ENCODE measurements at regions of chr13 and their contacts with region 1.

Region 1: DNA sequence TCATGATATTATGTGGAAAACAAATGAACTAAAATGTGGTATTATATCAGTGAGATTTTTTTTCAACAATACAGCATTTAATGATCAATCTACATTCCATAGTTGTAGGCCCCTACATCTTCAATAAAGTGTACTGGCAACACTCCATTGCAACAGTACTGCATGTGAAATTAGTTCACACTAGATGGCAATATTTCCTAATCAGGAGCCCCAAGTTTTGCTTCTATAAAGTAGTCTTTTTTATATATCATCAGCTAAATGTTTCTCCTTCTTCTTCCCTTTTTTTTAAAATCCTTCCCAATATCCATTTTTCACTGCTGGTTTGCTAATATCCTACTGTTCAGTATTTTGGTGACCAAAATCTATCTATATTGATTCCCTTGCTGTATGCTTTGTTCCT is 528.3 kb upstream of the ATXN8OS start:
- DNase-seq: no peak
- H3K4me3 Mint-ChIP-seq: no peak overlapping the region
- H3K27ac Mint-ChIP-seq: no peak overlapping the region
- H3K4me1 Mint-ChIP-seq: no peaks in the 10 kb centered on the region
- H3K27me3 Mint-ChIP-seq: no peaks in the 10 kb centered on the region
- CTCF ChIP-seq: no peak

Region 2: DNA sequence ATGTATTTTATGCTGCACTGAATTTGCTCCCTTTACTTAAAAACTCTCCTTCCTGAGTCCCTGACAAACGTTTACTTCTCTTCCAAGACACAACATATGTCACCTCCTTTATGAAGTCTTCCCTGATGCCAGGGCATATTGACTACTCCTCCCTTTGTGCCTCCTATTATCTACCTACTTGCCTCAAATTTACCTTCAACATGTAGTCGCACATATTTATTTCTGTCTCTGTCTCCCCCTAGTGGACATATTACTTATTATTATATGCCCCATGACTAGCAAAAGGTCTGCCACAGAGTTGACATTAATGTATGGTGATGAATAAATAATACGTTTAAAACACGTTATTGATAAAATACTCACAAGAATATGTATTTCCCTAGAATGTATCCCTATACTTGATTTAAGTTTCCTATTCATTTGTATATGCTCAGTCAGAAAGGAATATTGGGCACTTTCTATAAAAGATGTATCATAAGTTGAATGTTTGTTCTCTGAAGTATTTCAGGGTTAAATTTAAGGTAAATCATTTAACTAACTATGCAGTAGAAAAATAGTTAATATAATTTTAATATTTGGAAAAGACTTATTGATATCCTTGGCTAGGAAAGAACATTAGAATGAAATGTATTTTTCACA is 278.0 kb after region 1 on chr13:
- CTCF ChIA-PET with region 1: no interaction called
- intact Hi-C with region 1: loop called (anchors 1 kb)
- DNase-seq: no peak
- H3K4me3 Mint-ChIP-seq: no peak overlapping the region
- H3K27ac Mint-ChIP-seq: peak overlapping the region; percentile 11
- H3K4me1 Mint-ChIP-seq: peaks cover 14% of the 10 kb centered on the region
- H3K27me3 Mint-ChIP-seq: no peaks in the 10 kb centered on the region
- CTCF ChIP-seq: no peak

Region 3: DNA sequence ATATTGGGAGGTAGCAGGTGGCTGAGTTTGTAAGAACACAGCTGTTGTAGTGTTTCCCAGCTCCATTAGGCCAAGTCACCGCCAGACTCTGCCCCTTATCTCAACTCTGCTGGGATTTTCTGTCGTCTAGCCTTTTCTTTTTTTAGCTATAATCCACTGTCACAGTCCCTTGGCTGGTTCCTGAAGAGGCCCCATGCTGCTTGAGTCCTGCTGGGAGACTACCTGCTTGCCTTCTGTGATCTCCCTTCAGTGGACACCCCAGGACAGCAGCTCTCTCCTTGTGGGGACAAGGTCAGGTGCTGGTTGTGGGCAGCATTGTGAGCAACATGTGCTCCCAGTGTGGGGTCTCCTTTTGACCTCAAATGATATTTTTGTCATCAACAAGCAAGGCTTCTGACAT is 333.3 kb after region 1 on chr13:
- CTCF ChIA-PET with region 1: no interaction called
- intact Hi-C with region 1: no loop called
- DNase-seq: no peak
- H3K4me3 Mint-ChIP-seq: no peak overlapping the region
- H3K27ac Mint-ChIP-seq: no peak overlapping the region
- H3K4me1 Mint-ChIP-seq: no peaks in the 10 kb centered on the region
- H3K27me3 Mint-ChIP-seq: no peaks in the 10 kb centered on the region
- CTCF ChIP-seq: no peak